Caco-2 (cell line): ENCODE measurements at regions of chr15 and their contacts with region 1.

Region 1: DNA sequence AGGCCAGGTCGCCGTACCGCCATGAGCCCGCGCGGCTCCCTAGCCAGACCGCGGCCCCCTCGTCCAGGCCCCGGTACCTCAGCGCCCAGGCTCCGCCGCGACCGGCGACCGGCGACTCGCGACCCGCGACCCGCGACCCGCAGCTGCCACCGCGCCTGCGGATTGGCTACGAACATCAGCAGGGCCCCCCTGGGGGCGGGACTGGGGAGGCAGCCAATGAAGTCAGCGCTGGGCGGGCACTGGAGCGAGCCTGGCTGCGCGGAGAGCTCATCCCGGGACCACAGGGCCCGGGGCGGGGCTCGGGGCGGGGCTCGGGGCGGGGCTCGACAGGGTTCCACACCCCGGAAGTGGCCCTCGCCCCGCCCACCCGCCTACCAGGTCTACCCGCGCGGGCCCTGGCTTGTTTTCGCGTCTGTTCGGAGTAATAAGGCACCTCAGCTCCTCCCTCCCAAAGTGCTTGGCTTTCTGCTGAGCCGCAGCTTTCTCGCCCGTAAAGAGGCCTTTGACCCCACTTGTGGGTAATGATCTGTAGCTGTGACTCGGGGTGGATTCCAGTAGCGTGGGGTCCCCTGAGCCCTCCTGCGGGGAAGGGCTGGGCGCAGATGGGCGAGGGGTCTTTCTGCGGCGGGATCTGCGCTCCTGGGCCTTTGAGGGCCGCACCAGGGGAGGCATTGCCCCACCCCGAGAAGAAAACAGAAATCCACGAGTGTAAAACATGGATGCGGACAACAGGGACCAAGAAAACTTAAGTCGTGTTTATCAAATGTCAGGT is at the start of gene LYSMD4:
- DNase-seq: peak; percentile 97
- H3K4me3 ChIP-seq: peak within 1 kb of the TSS; percentile 75
- H3K4me3 Mint-ChIP-seq: peak within 1 kb of the TSS; percentile 85
- H3K27ac Mint-ChIP-seq: peak within 1 kb of the TSS; percentile 96
- H3K4me1 ChIP-seq: peaks cover 8% of the 10 kb centered on the region; the same call in 1 of the 2 replicates
- H3K4me1 Mint-ChIP-seq: no peaks in the 10 kb centered on the region
- H3K27me3 ChIP-seq: no peaks in the 10 kb centered on the region
- H3K27me3 Mint-ChIP-seq: no peaks in the 10 kb centered on the region
- CTCF ChIP-seq: no peak
- total RNA-seq, gene LYSMD4: 14.4 and 15.9 TPM in 2 replicates

Region 2: GRCh38 chr15:99250494-99251435 is 482.7 kb before region 1 on chr15:
- CTCF ChIA-PET with region 1: interaction called, 3 read pairs
- POLR2A ChIA-PET with region 1: interaction called, 19 read pairs
- intact Hi-C with region 1: loop called (anchors 1 kb)
- DNase-seq: peak; percentile 97 to 98
- H3K4me3 ChIP-seq: peak overlapping the region; percentile 84
- H3K4me3 Mint-ChIP-seq: no peak overlapping the region
- H3K27ac Mint-ChIP-seq: peak overlapping the region; percentile 92
- H3K4me1 ChIP-seq: no peaks in the 10 kb centered on the region; the same call in 1 of the 2 replicates
- H3K4me1 Mint-ChIP-seq: no peaks in the 10 kb centered on the region
- H3K27me3 ChIP-seq: no peaks in the 10 kb centered on the region
- H3K27me3 Mint-ChIP-seq: no peaks in the 10 kb centered on the region
- CTCF ChIP-seq: no peak

Region 3: GRCh38 chr15:99282121-99282520 is 451.3 kb before region 1 on chr15:
- CTCF ChIA-PET with region 1: no interaction called
- POLR2A ChIA-PET with region 1: no interaction called
- intact Hi-C with region 1: loop called (anchors 1 kb)
- DNase-seq: no peak
- H3K4me3 ChIP-seq: no peak overlapping the region
- H3K4me3 Mint-ChIP-seq: no peak overlapping the region
- H3K27ac Mint-ChIP-seq: no peak overlapping the region
- H3K4me1 ChIP-seq: no peaks in the 10 kb centered on the region
- H3K4me1 Mint-ChIP-seq: no peaks in the 10 kb centered on the region
- H3K27me3 ChIP-seq: no peaks in the 10 kb centered on the region
- H3K27me3 Mint-ChIP-seq: no peaks in the 10 kb centered on the region
- CTCF ChIP-seq: no peak

Region 4: GRCh38 chr15:99385865-99386264 is 347.6 kb before region 1 on chr15:
- CTCF ChIA-PET with region 1: interaction called, 11 read pairs
- POLR2A ChIA-PET with region 1: no interaction called
- intact Hi-C with region 1: no loop called
- DNase-seq: peak in 1 of 2 experiments; percentile 10
- H3K4me3 ChIP-seq: no peak overlapping the region
- H3K4me3 Mint-ChIP-seq: no peak overlapping the region
- H3K27ac Mint-ChIP-seq: no peak overlapping the region
- H3K4me1 ChIP-seq: peaks cover 17% of the 10 kb centered on the region
- H3K4me1 Mint-ChIP-seq: peaks cover 7% of the 10 kb centered on the region
- H3K27me3 ChIP-seq: no peaks in the 10 kb centered on the region
- H3K27me3 Mint-ChIP-seq: no peaks in the 10 kb centered on the region
- CTCF ChIP-seq: no peak

Region 5: DNA sequence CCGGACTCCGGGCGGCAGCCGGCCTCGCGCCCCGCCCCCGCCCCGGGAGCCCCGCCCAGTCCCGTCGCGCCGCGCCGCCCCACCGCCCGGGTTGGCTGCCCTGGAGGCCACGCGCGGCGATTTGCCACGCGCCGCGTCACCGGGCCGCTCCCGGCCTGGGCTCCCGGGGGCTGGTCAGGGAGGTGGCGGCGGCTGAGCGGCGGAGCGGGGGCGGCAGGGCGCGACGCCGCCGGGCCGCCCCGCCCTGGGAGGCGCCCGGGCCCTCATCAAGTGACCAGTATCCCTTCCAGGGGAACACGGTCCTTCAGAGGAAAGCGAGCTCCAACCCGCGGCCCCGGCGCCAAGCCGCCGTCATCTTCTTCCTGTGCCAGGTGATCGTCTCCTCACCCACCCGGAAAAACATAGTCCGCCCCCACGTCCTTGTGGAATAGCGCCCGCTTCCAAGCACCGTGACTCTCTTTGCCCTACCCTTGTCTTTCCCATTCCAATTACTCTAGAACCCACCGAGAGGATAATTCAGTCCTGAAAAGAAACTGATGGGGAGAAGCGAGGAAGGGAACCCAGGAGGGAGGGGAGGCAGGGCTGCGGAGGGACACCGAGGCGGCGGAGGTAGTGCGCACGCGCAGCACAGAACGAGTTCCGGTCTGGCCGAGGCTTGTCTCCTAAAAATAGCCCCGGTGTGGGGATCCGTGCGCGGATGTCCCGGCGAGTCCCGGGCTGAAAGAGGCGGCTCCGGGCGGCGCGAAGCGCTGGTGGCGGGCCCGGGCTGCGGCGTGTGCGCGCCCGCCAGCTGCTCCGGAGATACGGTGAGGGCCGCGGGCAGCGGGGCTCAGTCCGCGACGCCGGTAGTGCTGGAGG is 167.9 kb before region 1 on chr15 and contains the start of gene MEF2A:
- CTCF ChIA-PET with region 1: no interaction called
- POLR2A ChIA-PET with region 1: interaction called, 10 read pairs
- intact Hi-C with region 1: loop called (anchors 5 kb)
- DNase-seq: peak; percentile 94 to 95
- H3K4me3 ChIP-seq: peak within 1 kb of the TSS; percentile 65
- H3K4me3 Mint-ChIP-seq: peak within 1 kb of the TSS; percentile 86
- H3K27ac Mint-ChIP-seq: peak within 1 kb of the TSS; percentile 72
- H3K4me1 ChIP-seq: no peaks in the 10 kb centered on the region; the same call in 1 of the 2 replicates
- H3K4me1 Mint-ChIP-seq: no peaks in the 10 kb centered on the region
- H3K27me3 ChIP-seq: no peaks in the 10 kb centered on the region
- H3K27me3 Mint-ChIP-seq: no peaks in the 10 kb centered on the region
- CTCF ChIP-seq: no peak
- total RNA-seq, gene MEF2A: 19.5 and 19.6 TPM in 2 replicates

Region 6: DNA sequence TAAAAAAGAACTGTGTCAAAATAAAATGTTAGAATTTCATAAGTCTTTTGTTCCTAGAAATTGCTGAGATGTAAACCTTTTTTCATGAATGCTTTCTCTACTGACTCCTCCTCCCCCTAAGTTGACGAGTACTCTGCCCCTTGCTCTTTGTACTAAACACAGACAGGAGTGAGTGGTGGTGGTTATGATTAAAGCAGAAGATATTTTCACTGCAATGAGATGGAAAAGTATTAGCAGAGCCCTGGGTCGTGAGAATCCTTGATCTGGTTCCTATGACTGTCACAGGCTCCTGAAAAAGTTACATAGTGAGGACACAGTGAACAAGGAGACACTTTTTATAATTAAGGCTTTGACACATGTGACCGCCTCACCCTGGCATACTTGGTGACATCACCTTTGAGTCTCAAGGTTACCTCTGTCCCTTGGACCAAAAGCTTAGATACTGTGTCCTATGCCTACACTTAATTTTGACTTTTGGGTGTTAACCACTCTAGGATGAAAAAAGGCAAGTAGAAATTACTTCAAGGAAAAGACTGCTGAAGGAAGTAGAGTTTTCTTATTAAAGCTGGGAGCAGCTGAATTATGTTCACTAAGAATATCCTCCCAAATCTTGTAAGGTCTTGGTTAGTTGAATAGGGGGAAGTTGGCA is 130.2 kb after region 1 on chr15:
- CTCF ChIA-PET with region 1: no interaction called
- POLR2A ChIA-PET with region 1: no interaction called
- intact Hi-C with region 1: no loop called
- DNase-seq: no peak
- H3K4me3 ChIP-seq: no peak overlapping the region
- H3K4me3 Mint-ChIP-seq: no peak overlapping the region
- H3K27ac Mint-ChIP-seq: no peak overlapping the region
- H3K4me1 ChIP-seq: no peaks in the 10 kb centered on the region
- H3K4me1 Mint-ChIP-seq: no peaks in the 10 kb centered on the region
- H3K27me3 ChIP-seq: no peaks in the 10 kb centered on the region
- H3K27me3 Mint-ChIP-seq: peaks cover 9% of the 10 kb centered on the region
- CTCF ChIP-seq: no peak